ENCODE measurements at regions of chr1 and their contacts with region 1.

Region 1: GRCh38 chr1:184716158-184716557 is 38.5 kb downstream of the EDEM3 start:
- DNase-seq: no peak
- ATAC-seq: no peak
- H3K4me3 Mint-ChIP-seq: no peak overlapping the region
- H3K27ac Mint-ChIP-seq: no peak overlapping the region
- H3K4me1 Mint-ChIP-seq: no peaks in the 10 kb centered on the region
- H3K27me3 Mint-ChIP-seq: no peaks in the 10 kb centered on the region
- CTCF ChIP-seq: no peak

Region 2: GRCh38 chr1:182795563-182796228 is 1920.5 kb before region 1 on chr1:
- CTCF ChIA-PET with region 1: no interaction called
- POLR2A ChIA-PET with region 1: interaction called, 12 read pairs
- intact Hi-C with region 1: no loop called
- DNase-seq: no peak
- ATAC-seq: peak; percentile 56
- H3K4me3 Mint-ChIP-seq: no peak overlapping the region
- H3K27ac Mint-ChIP-seq: no peak overlapping the region
- H3K4me1 Mint-ChIP-seq: peaks cover 13% of the 10 kb centered on the region
- H3K27me3 Mint-ChIP-seq: peaks cover 3% of the 10 kb centered on the region
- CTCF ChIP-seq: no peak

Region 3: GRCh38 chr1:183911285-183911684 is 804.9 kb before region 1 on chr1:
- CTCF ChIA-PET with region 1: no interaction called
- POLR2A ChIA-PET with region 1: no interaction called
- intact Hi-C with region 1: no loop called
- DNase-seq: peak; percentile 42
- ATAC-seq: peak; percentile 86
- H3K4me3 Mint-ChIP-seq: peak overlapping the region; percentile 46
- H3K27ac Mint-ChIP-seq: peak overlapping the region; percentile 91
- H3K4me1 Mint-ChIP-seq: peaks cover 54% of the 10 kb centered on the region
- H3K27me3 Mint-ChIP-seq: no peaks in the 10 kb centered on the region
- CTCF ChIP-seq: no peak

Measured in activated B cell treated with CpG ODN at 0.5 μM for 24 hours (primary cell).